B cell (primary cell): ENCODE measurements at regions of chr1 and their contacts with region 1.

Region 1: GRCh38 chr1:90835661-90836344 is 118.7 kb upstream of the BARHL2 start:
- DNase-seq: peak; percentile 48
- ATAC-seq: no peak
- H3K4me3 ChIP-seq: peak overlapping the region in 4 of 5 experiments; percentile 14 to 51 (median 40)
- H3K4me3 Mint-ChIP-seq: peak overlapping the region; percentile 61
- H3K27ac ChIP-seq: no peak overlapping the region
- H3K27ac Mint-ChIP-seq: no peak overlapping the region
- H3K4me1 ChIP-seq: peaks cover 20 to 33% of the 10 kb centered on the region in 2 donors
- H3K4me1 Mint-ChIP-seq: peaks cover 26% of the 10 kb centered on the region
- H3K27me3 ChIP-seq: peaks cover 9 to 85% (median 75%) of the 10 kb centered on the region in 4 experiments
- H3K27me3 Mint-ChIP-seq: peaks cover 83% of the 10 kb centered on the region
- CTCF ChIP-seq: no peak

Region 2: DNA sequence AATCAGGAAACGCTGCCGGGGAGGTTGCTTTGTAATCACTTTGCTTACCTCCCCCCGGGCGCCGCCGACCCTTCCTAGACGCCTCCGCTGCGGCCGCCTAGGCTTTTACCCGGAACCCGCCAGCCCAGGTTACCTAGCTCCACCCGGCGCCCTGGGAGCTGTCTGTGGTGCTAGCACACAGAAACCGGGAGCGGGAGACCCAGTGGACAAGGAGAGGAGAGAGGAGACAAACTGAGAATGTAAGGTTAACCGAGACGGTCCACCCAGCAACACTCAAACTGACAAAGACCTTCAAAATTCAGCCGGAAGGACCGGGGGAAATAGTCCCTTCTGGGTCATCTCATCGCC is 128.5 kb before region 1 on chr1:
- CTCF ChIA-PET with region 1: no interaction called
- POLR2A ChIA-PET with region 1: no interaction called
- intact Hi-C with region 1: no loop called
- DNase-seq: no peak
- ATAC-seq: no peak
- H3K4me3 ChIP-seq: no peak overlapping the region
- H3K4me3 Mint-ChIP-seq: peak overlapping the region; percentile 11
- H3K27ac ChIP-seq: no peak overlapping the region
- H3K27ac Mint-ChIP-seq: no peak overlapping the region
- H3K4me1 ChIP-seq: peaks cover 12 to 34% of the 10 kb centered on the region in 2 donors
- H3K4me1 Mint-ChIP-seq: peaks cover 12% of the 10 kb centered on the region
- H3K27me3 ChIP-seq: peaks cover 0 to 79% (median 71%) of the 10 kb centered on the region in 4 experiments
- H3K27me3 Mint-ChIP-seq: peaks cover 76% of the 10 kb centered on the region
- CTCF ChIP-seq: no peak

Region 3: DNA sequence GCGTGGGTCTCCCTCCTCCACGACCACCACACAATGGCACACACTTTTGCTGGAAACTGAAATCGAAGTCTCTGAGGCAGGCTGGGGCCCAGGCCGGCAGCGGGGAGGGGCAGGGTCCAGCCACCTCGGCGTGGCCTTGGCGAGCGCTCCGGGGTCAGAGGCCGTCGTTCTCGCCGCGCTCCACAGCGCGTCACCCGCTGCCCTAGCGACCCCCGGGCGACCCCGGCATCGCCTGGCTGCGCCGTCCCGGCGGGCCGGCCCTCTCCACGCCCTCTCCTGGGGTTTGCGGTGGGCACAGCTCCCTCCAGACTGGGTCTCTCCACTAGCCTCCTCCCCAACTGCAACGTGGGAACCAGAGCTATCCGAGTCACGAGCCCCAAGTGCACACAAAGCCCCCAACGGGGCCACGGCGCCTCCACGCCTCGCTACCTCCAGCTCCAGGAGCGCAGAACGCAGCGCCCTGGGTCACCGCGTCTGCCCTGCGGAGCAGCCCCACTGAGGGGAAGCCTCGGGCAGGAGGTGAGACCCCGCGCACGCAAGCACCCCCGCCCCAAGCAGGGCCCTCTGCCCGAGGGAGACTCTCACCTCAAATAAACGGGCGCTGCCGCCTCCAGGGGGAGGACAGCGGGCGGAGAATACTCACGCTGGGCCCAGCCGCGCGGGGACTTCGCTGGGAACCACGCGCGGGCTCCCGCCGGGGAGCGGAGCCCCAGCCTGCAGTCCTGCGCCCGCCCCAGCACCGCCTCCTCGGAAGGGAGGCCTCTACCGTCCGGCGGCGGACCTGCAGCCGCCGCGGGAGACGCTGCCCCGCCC is 15.3 kb after region 1 on chr1:
- CTCF ChIA-PET with region 1: interaction called, 5 read pairs
- POLR2A ChIA-PET with region 1: interaction called, 5 read pairs
- intact Hi-C with region 1: loop called (anchors 1 kb)
- DNase-seq: peak; percentile 83
- ATAC-seq: peak; percentile 99
- H3K4me3 ChIP-seq: peak overlapping the region; percentile 17 to 72 (median 62)
- H3K4me3 Mint-ChIP-seq: peak overlapping the region; percentile 90
- H3K27ac ChIP-seq: no peak overlapping the region
- H3K27ac Mint-ChIP-seq: no peak overlapping the region
- H3K4me1 ChIP-seq: peaks cover 15 to 19% of the 10 kb centered on the region in 2 donors
- H3K4me1 Mint-ChIP-seq: peaks cover 13% of the 10 kb centered on the region
- H3K27me3 ChIP-seq: peaks cover 3 to 23% (median 23%) of the 10 kb centered on the region in 4 experiments
- H3K27me3 Mint-ChIP-seq: peaks cover 43% of the 10 kb centered on the region
- CTCF ChIP-seq: peak; percentile 76

Region 4: GRCh38 chr1:91133248-91133647 is 297.4 kb after region 1 on chr1:
- CTCF ChIA-PET with region 1: no interaction called
- POLR2A ChIA-PET with region 1: no interaction called
- intact Hi-C with region 1: no loop called
- DNase-seq: no peak
- ATAC-seq: no peak
- H3K4me3 ChIP-seq: no peak overlapping the region
- H3K4me3 Mint-ChIP-seq: no peak overlapping the region
- H3K27ac ChIP-seq: no peak overlapping the region
- H3K27ac Mint-ChIP-seq: no peak overlapping the region
- H3K4me1 ChIP-seq: no peaks in the 10 kb centered on the region
- H3K4me1 Mint-ChIP-seq: no peaks in the 10 kb centered on the region
- H3K27me3 ChIP-seq: no peaks in the 10 kb centered on the region
- H3K27me3 Mint-ChIP-seq: no peaks in the 10 kb centered on the region
- CTCF ChIP-seq: no peak

Region 5: DNA sequence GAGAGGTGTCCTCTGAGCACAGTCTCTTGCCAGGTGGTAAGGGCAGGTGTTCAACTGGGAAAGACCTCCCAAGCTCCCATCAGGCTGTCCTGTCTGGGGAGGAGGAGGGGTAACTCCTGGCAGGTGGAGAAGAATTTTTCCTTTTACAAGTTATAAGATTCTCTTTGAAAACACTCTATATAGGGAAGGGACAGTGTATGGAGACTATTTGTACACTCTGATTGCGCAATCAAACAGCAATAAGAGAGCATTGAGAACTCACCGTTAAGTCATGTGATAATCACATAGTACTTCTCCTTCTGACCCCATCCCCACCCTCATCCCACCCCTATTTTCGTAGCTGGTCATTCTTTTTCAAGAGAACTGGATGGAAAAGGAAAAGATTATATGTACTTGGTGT is 365.4 kb after region 1 on chr1:
- CTCF ChIA-PET with region 1: no interaction called
- POLR2A ChIA-PET with region 1: no interaction called
- intact Hi-C with region 1: no loop called
- DNase-seq: no peak
- ATAC-seq: no peak
- H3K4me3 ChIP-seq: no peak overlapping the region
- H3K4me3 Mint-ChIP-seq: no peak overlapping the region
- H3K27ac ChIP-seq: no peak overlapping the region
- H3K27ac Mint-ChIP-seq: no peak overlapping the region
- H3K4me1 ChIP-seq: no peaks in the 10 kb centered on the region
- H3K4me1 Mint-ChIP-seq: no peaks in the 10 kb centered on the region
- H3K27me3 ChIP-seq: peaks cover 0 to 5% (median 0%) of the 10 kb centered on the region in 4 experiments
- H3K27me3 Mint-ChIP-seq: peaks cover 31% of the 10 kb centered on the region
- CTCF ChIP-seq: no peak